Cardiac septum (tissue), 1 donor: ENCODE measurements at regions of chr9 and their contacts with region 1.

Region 1: DNA sequence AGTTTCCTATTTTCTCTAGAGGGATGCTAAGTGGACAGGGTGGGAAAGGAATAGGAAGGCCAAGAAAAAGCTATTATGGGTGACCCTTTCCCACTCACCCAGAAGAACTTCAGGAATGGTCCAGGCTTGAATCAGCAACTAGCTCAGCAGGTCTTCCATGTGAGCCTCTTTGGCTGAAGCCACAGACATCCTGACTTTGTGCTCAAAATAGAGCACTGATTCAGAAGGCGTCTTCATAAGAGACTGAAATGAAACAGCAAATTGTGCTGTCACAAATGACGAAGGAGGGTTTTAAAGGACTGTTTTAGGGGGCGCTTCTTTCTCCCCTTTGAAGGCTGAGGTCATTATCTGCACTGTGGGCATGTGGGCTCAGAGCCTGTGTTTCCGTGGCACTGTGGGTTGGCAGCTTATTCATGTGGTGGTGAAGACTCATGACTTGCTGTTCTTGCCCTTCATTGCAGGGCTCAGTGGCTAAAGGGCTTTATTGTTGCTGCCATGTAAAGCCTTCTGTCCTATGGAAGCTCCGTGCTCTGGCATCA is 65.8 kb upstream of the NFIL3 start:
- DNase-seq: no peak

Region 2: GRCh38 chr9:91101611-91102168 is 387.7 kb before region 1 on chr9:
- intact Hi-C with region 1: loop called (anchors 2 kb)
- DNase-seq: no peak

Region 3: DNA sequence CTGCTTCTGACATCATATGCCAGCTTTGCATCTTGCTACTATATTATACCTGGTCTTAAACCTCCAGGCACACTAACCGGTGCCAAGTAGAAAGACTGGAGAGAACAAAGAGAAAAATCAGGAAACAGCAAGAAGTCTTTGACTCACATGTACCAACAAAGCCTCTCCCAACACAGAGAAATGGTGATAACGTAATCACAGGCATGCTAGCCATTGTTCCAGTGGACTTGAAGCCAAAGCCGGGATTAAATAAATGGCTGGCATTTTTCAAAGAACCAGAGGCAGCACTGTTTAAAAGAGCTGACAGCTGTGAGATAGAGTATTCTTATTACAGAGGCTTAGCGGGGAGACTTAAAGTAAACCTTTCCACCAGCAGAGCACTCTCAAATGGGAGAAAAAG is 82.6 kb after region 1 on chr9:
- intact Hi-C with region 1: loop called (anchors 5 kb)
- DNase-seq: peak; percentile 26